ENCODE measurements at regions of chr2 and their contacts with region 1.

Region 1: GRCh38 chr2:26327291-26328272 is 18.4 kb upstream of the SELENOI start:
- DNase-seq: no peak

Region 2: DNA sequence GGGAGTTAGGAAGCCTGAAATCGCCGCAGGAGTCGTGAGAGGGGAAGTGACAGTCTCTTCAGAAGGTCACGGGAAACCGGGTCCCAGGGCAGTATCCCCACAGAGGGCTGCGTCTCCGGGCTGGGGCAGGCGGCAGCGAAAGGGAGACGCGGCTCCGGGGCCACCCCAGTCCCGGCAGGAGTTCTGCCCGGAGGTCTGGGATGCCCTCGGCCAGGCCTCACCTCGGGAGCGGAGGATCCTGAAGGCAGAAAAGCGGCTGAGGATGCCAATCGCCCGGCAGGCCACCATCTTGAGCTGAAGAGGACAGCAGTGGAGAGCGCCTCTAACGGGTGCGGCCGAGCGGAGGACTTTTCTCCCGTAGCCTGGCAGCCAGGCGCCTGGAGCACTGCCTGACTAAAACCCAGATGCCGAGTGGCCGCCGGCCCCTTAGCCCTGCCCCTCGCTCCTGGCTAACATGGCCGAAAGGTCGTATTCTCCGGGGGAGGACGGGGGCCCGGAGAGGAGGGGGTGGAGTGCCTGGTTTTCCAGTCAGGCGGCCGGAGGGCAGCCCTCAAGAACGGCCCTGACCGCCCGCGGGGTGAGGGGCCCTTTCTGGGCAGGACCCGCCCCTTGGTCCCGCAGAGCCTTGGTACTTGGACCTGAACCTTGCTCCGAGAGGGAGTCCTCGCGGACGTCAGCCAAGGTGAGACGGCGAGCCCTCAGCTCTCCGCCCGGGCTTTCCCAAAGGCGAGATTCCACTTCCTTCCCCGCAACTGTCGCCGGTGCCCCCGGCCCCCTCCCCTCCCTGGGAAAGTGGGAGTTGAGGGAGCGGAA is 83.1 kb before region 1 on chr2 and contains the starts of genes HADHA and HADHB:
- intact Hi-C with region 1: loop called in 1 of 2 experiments (anchors 10 kb)
- DNase-seq: peak; percentile 96
- total RNA-seq, gene HADHA: 104 to 113 TPM
- total RNA-seq, gene HADHB: 87.6 to 125 TPM

Region 3: GRCh38 chr2:26299471-26300101 is 28.0 kb before region 1 on chr2:
- intact Hi-C with region 1: no loop called
- DNase-seq: no peak

Region 4: GRCh38 chr2:27380626-27381545 is 1053.3 kb after region 1 on chr2 and contains the start of gene ZNF513:
- intact Hi-C with region 1: no loop called
- DNase-seq: peak; percentile 99
- total RNA-seq, gene ZNF513: 15.6 to 15.7 TPM